CD4-positive, alpha-beta memory T cell (primary cell): ENCODE measurements at regions of chr3 and their contacts with region 1.

Region 1: GRCh38 chr3:112642912-112643506 is 2.1 kb upstream of the CCDC80 start:
- DNase-seq: peak; percentile 74 to 79 (median 78)
- H3K4me3 ChIP-seq: peak overlapping the region in 1 of 2 donors; percentile 1
- H3K4me3 Mint-ChIP-seq: peak overlapping the region; percentile 67 to 86 (median 81)
- H3K27ac ChIP-seq: no peak overlapping the region
- H3K27ac Mint-ChIP-seq: peak overlapping the region; percentile 0 to 53 (median 15)
- H3K4me1 ChIP-seq: peaks cover 14% of the 10 kb centered on the region
- H3K4me1 Mint-ChIP-seq: peaks cover 11 to 18% (median 14%) of the 10 kb centered on the region in 4 donors
- H3K27me3 ChIP-seq: no peaks in the 10 kb centered on the region
- H3K27me3 Mint-ChIP-seq: peaks cover 5% of the 10 kb centered on the region in 2 donors

Region 2: DNA sequence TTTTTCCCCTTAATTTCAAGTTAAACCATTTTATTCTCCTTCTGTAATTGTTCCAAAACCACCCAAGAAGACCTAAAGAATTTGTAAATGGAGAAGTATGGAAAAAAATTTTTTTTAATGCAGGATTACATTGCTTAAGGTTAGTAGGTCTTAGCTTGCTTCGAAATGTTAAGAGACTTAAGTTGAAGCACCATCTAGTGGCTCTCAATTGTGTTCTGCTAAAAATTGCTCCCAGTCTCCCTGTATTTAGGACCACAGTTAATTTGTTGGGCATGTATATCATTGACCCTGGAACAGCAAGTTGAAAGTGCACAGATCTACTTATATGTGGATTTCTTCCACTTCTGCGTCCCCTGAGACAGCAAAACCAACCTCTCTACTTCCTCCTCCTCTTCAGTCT is 171.3 kb after region 1 on chr3:
- CTCF ChIA-PET with region 1: interaction called, 122 read pairs
- POLR2A ChIA-PET with region 1: interaction called, 5 read pairs
- intact Hi-C with region 1: loop called (anchors 1 kb)
- DNase-seq: peak in 2 of 5 donors; percentile 9 to 13
- H3K4me3 ChIP-seq: no peak overlapping the region
- H3K4me3 Mint-ChIP-seq: peak overlapping the region in 1 of 8 donors; percentile 61
- H3K27ac ChIP-seq: no peak overlapping the region
- H3K27ac Mint-ChIP-seq: peak overlapping the region in 1 of 7 donors; percentile 68
- H3K4me1 ChIP-seq: peaks cover 27% of the 10 kb centered on the region
- H3K4me1 Mint-ChIP-seq: peaks cover 18 to 44% (median 32%) of the 10 kb centered on the region in 4 donors
- H3K27me3 ChIP-seq: no peaks in the 10 kb centered on the region
- H3K27me3 Mint-ChIP-seq: no peaks in the 10 kb centered on the region

Region 3: DNA sequence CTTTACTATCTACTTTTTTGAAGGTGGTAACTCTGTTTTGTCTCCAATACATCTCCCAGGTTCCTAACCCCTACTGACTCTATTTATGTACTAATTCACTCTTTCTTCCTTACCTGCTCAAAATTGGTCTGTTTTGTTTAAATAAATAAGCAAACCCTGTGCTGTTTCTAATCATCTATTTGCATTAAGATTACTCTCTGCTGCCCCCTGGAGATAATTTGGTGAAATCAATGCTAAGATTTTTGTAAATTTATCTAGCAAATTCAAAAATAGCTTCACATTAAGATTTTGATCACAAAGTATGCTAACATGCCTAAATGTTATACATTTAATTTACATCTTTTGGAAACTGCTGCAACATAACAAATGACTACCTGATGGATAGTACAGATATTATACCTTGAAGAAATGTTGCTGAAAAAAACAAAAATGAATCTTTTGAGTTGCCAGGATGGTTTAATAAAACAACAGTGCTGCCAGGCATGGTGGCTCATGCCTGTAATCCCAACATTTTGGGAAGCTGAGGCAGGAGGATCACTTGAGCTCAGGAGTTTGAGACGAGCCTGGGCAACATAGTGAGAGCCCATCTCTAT is 336.3 kb after region 1 on chr3:
- CTCF ChIA-PET with region 1: interaction called, 84 read pairs
- POLR2A ChIA-PET with region 1: interaction called, 8 read pairs
- intact Hi-C with region 1: loop called (anchors 1 kb)
- DNase-seq: peak in 4 of 5 donors; percentile 59 to 67 (median 62)
- H3K4me3 ChIP-seq: no peak overlapping the region
- H3K4me3 Mint-ChIP-seq: peak overlapping the region in 2 of 8 donors; percentile 12 to 39
- H3K27ac ChIP-seq: no peak overlapping the region
- H3K27ac Mint-ChIP-seq: peak overlapping the region in 6 of 7 donors; percentile 0 to 81 (median 42)
- H3K4me1 ChIP-seq: peaks cover 68% of the 10 kb centered on the region
- H3K4me1 Mint-ChIP-seq: peaks cover 48 to 73% (median 60%) of the 10 kb centered on the region in 4 donors
- H3K27me3 ChIP-seq: no peaks in the 10 kb centered on the region
- H3K27me3 Mint-ChIP-seq: no peaks in the 10 kb centered on the region

Region 4: GRCh38 chr3:112990672-112991602 is 347.9 kb after region 1 on chr3 and contains the start of gene GTPBP8:
- CTCF ChIA-PET with region 1: interaction called, 20 read pairs
- POLR2A ChIA-PET with region 1: no interaction called
- intact Hi-C with region 1: no loop called
- DNase-seq: peak; percentile 79 to 88 (median 81)
- H3K4me3 ChIP-seq: peak within 1 kb of the TSS; percentile 73 to 91
- H3K4me3 Mint-ChIP-seq: peak within 1 kb of the TSS; percentile 95 to 98 (median 96)
- H3K27ac ChIP-seq: peak within 1 kb of the TSS; percentile 78
- H3K27ac Mint-ChIP-seq: peak within 1 kb of the TSS; percentile 94 to 98 (median 96)
- H3K4me1 ChIP-seq: peaks cover 49% of the 10 kb centered on the region
- H3K4me1 Mint-ChIP-seq: peaks cover 51 to 80% (median 62%) of the 10 kb centered on the region in 4 donors
- H3K27me3 ChIP-seq: no peaks in the 10 kb centered on the region
- H3K27me3 Mint-ChIP-seq: no peaks in the 10 kb centered on the region
- total RNA-seq, gene GTPBP8: 36.0 to 40.0 TPM

Region 5: GRCh38 chr3:113051302-113051711 is 408.3 kb after region 1 on chr3:
- CTCF ChIA-PET with region 1: interaction called, 4 read pairs
- POLR2A ChIA-PET with region 1: no interaction called
- intact Hi-C with region 1: loop called (anchors 1 kb)
- DNase-seq: peak; percentile 77 to 84 (median 80)
- H3K4me3 ChIP-seq: no peak overlapping the region
- H3K4me3 Mint-ChIP-seq: no peak overlapping the region
- H3K27ac ChIP-seq: no peak overlapping the region
- H3K27ac Mint-ChIP-seq: no peak overlapping the region
- H3K4me1 ChIP-seq: peaks cover 8% of the 10 kb centered on the region
- H3K4me1 Mint-ChIP-seq: peaks cover 0 to 9% (median 2%) of the 10 kb centered on the region in 4 donors
- H3K27me3 ChIP-seq: no peaks in the 10 kb centered on the region
- H3K27me3 Mint-ChIP-seq: no peaks in the 10 kb centered on the region